ENCODE measurements at regions of chr6 and their contacts with region 1.

Region 1: GRCh38 chr6:56542364-56543331 is 100.0 kb downstream of the DST start:
- DNase-seq: peak; percentile 89
- H3K4me3 ChIP-seq: peak overlapping the region; percentile 63
- CTCF ChIP-seq: peak; percentile 31

Region 2: GRCh38 chr6:56528412-56528841 is 14.2 kb before region 1 on chr6:
- CTCF ChIA-PET with region 1: interaction called, 58 read pairs
- POLR2A ChIA-PET with region 1: interaction called, 7 read pairs
- DNase-seq: peak; percentile 95
- H3K4me3 ChIP-seq: no peak overlapping the region
- CTCF ChIP-seq: no peak

Region 3: DNA sequence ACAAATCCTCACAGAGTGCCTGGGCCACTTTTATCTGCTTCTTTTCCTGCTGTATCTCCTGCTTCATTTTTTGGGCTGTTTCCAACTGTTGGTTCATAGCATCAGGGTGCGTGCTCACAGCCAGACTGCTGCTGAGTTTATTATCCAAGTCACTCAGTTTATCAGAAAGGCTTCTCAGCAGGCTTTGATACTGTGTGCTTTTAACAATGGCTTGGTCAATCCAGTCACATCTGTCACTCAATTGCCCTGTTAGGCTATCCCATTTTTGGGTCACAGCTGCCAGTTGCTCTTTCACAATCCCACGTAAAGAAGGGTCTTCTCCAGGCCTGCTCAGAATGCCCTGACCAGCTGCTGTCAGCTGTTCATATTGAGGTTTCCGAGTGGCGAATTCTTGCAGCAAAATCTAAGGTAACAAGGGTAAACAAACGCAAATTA is 12.8 kb after region 1 on chr6:
- CTCF ChIA-PET with region 1: interaction called, 24 read pairs
- POLR2A ChIA-PET with region 1: interaction called, 3 read pairs
- DNase-seq: no peak
- H3K4me3 ChIP-seq: no peak overlapping the region
- CTCF ChIP-seq: no peak

Region 4: GRCh38 chr6:56604186-56604585 is 61.5 kb after region 1 on chr6:
- CTCF ChIA-PET with region 1: no interaction called
- POLR2A ChIA-PET with region 1: no interaction called
- DNase-seq: no peak
- H3K4me3 ChIP-seq: no peak overlapping the region
- CTCF ChIP-seq: no peak

Region 5: DNA sequence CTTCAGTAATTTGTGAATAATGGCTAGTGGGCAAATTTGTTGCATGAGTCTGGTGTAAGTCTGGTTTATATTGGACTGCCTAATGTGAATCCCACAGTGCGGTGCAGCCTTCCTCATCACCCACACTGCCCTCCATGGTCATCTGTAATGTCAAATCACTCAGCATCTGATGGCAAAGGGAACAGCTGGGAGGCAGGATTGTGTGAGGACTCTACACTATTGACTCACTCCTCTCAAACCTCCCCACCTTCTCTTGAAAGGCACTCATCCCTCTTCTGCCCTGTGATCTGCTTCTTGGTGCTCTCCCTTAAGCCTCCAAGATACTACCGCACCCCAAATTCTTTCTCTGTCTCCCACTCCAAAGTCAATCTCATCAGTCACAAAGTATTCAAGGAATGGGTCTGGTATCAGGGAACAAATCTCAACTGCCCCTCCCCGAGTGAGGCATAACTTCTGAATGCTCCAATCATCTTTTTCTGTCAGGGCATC is 266.3 kb after region 1 on chr6:
- CTCF ChIA-PET with region 1: no interaction called
- POLR2A ChIA-PET with region 1: no interaction called
- DNase-seq: no peak
- H3K4me3 ChIP-seq: no peak overlapping the region
- CTCF ChIP-seq: no peak

Measured in AG04449 (cell line).